ENCODE measurements at regions of chr20 and their contacts with region 1.

Region 1: GRCh38 chr20:51562332-51563155 is 20.0 kb upstream of the NFATC2 start:
- DNase-seq: peak; percentile 63
- ATAC-seq: peak; percentile 73
- H3K4me3 Mint-ChIP-seq: peak overlapping the region; percentile 77
- H3K27ac Mint-ChIP-seq: no peak overlapping the region
- H3K4me1 Mint-ChIP-seq: peaks cover 25% of the 10 kb centered on the region
- H3K27me3 Mint-ChIP-seq: peaks cover 60% of the 10 kb centered on the region
- CTCF ChIP-seq: no peak

Region 2: GRCh38 chr20:51541189-51542032 is 21.1 kb before region 1 on chr20:
- CTCF ChIA-PET with region 1: interaction called, 15 read pairs
- POLR2A ChIA-PET with region 1: no interaction called
- DNase-seq: peak; percentile 25
- ATAC-seq: peak; percentile 7; the same call in 1 of the 2 replicates
- H3K4me3 Mint-ChIP-seq: peak overlapping the region; percentile 58
- H3K27ac Mint-ChIP-seq: no peak overlapping the region
- H3K4me1 Mint-ChIP-seq: peaks cover 16% of the 10 kb centered on the region
- H3K27me3 Mint-ChIP-seq: peaks cover 37% of the 10 kb centered on the region
- CTCF ChIP-seq: no peak